ENCODE measurements at regions of chr15 and their contacts with region 1.

Region 1: DNA sequence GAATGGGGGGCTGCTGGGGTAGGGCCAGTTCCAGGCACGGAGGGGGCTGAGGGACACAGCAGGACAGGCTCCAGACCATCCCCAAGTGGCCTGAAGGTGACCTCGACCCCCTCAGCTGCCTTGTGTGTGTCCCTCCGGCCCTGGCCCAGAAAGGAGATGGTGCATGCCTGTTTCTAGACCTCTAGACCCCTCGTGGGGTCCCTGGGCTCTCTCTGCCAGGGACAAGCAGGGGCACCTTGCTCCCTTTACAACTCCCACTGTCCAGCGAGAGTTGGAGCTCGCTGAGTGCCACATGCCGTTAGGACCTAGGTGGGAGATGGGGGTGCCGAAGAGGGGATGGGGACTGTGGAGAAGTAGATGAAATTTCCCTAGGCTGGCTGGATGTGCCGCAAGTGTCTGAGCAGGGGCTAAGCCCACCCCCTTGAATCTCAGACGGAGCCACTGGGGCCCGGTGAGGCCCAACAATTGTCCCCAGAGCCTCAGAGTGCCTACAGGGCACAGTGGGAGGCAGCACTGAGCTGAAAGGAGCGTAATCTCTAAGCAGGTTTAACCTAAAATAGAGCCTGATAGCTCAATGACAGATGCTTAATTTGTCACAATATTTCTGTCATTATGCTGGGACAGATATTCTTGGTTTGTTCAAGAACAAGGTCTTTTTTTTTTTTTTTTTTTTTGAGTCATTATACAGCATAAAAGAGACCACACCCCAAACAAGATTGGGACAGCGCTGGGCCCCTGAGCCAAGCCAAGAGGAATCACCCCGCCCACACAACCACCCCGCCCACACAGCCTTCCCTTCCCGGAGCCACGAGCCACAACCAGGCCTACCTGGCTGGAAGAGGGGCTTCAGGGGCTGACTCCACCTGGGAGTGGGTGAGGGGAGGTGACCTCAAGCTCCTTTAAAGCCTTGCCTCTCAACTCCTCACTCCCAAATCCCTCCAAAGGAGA is 23.6 kb upstream of the KLF13 start:
- DNase-seq: peak; percentile 35
- H3K4me3 Mint-ChIP-seq: no peak overlapping the region
- H3K27ac Mint-ChIP-seq: peak overlapping the region; percentile 5
- H3K4me1 Mint-ChIP-seq: peaks cover 13% of the 10 kb centered on the region
- H3K27me3 Mint-ChIP-seq: no peaks in the 10 kb centered on the region

Region 2: GRCh38 chr15:31265871-31266711 is 37.0 kb before region 1 on chr15:
- CTCF ChIA-PET with region 1: no interaction called
- POLR2A ChIA-PET with region 1: no interaction called
- intact Hi-C with region 1: loop called (anchors 5 kb)
- DNase-seq: peak; percentile 82
- H3K4me3 Mint-ChIP-seq: peak overlapping the region; percentile 9
- H3K27ac Mint-ChIP-seq: peak overlapping the region; percentile 59
- H3K4me1 Mint-ChIP-seq: peaks cover 68% of the 10 kb centered on the region
- H3K27me3 Mint-ChIP-seq: no peaks in the 10 kb centered on the region

Measured in activated CD4-positive, alpha-beta memory T cell treated with anti-CD3 and anti-CD28 coated beads for 36 hours (primary cell).